ENCODE measurements at regions of chr15 and their contacts with region 1.

Region 1: DNA sequence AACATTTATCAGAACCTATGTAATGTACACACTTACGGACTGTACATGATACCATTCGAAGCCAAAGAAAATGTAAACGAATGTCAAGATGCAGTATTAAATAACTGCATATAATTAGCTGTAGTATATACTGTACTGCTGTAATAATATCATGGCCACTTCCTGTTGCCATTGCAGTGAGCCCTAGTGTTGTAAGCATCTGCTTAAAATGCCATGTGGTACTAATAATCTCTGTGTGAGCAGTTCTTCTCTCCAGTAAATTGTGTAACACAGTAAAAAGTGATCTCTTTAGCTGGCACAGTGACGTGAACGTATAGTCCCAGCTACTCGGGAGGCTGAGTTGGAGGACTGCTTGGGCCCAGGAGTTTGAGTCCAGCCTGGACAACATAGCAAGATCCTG is 8.6 kb downstream of the SPG11 start:
- DNase-seq: no peak
- H3K4me3 ChIP-seq: no peak overlapping the region
- H3K27ac ChIP-seq: no peak overlapping the region
- H3K27me3 ChIP-seq: no peaks in the 10 kb centered on the region
- CTCF ChIP-seq: no peak

Region 2: DNA sequence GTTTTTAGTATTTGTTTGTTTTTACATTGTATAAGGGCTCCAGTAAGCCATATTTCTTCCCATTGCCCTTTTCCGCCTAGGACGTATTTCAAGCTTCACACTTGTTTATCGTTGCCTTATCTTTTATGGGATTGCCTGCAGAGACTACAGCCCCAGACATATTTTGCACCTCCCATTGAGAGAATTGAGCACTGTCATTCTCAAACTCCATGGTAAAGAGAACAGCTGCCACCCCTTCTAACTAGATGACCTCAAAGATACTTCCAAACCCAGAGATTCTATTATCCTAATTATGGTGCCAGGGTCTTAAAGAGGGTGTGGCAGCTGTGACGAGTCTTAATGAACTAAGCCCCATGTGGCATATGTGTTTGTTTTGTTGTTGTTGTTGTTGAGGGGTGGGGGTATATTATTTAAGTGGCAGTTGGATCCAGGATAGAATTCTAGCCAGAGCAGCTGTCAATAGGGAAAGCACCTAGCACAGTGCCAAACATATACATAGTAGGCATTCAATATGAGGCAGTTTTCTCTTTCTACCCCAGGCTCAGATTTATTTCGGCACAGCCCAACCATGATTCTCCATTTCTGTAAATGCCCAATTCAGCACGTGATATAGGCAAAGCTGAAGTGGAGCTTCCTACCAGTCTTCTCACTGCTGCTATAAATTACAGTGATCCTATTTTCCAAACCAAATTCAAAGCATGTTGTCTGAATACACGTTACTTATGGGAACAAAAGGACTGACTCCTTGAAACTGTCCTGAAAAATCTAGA is 1161.0 kb before region 1 on chr15:
- intact Hi-C with region 1: no loop called
- DNase-seq: no peak
- H3K4me3 ChIP-seq: peak overlapping the region; percentile 67 to 93 (median 83)
- H3K27ac ChIP-seq: peak overlapping the region in 54 of 59 donors; percentile 2 to 92 (median 78)
- H3K27me3 ChIP-seq: no peaks in the 10 kb centered on the region
- CTCF ChIP-seq: no peak

Region 3: GRCh38 chr15:44385344-44385942 is 269.4 kb before region 1 on chr15:
- intact Hi-C with region 1: no loop called
- DNase-seq: no peak
- H3K4me3 ChIP-seq: no peak overlapping the region
- H3K27ac ChIP-seq: peak overlapping the region in 10 of 59 donors; percentile 3 to 64 (median 34)
- H3K27me3 ChIP-seq: no peaks in the 10 kb centered on the region
- CTCF ChIP-seq: no peak

Region 4: DNA sequence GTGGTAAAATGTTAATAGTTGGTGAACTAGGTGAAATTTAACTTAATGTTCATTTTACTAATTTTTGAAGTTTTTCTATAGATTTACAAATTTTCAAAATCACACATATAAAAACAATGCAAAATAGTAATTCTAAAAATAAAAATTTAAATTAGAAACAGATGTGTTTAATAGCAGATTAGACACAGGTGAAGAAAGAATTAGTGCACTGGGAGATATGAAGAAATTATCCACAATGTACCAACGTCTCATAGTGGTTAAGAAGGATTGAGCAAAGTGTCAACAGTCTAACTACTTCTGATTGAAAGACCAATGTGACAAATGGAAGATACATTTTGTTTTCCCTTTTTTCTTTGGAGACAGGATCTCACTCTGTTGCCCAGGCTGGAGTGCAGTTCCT is 17.9 kb before region 1 on chr15:
- intact Hi-C with region 1: loop called in 1 of 2 experiments (anchors 2 kb)
- DNase-seq: no peak
- H3K4me3 ChIP-seq: no peak overlapping the region
- H3K27ac ChIP-seq: no peak overlapping the region
- H3K27me3 ChIP-seq: no peaks in the 10 kb centered on the region
- CTCF ChIP-seq: no peak

Measured in dorsolateral prefrontal cortex (tissue), 120 donors.